Calu3 (cell line): ENCODE measurements at regions of chr3 and their contacts with region 1.

Region 1: DNA sequence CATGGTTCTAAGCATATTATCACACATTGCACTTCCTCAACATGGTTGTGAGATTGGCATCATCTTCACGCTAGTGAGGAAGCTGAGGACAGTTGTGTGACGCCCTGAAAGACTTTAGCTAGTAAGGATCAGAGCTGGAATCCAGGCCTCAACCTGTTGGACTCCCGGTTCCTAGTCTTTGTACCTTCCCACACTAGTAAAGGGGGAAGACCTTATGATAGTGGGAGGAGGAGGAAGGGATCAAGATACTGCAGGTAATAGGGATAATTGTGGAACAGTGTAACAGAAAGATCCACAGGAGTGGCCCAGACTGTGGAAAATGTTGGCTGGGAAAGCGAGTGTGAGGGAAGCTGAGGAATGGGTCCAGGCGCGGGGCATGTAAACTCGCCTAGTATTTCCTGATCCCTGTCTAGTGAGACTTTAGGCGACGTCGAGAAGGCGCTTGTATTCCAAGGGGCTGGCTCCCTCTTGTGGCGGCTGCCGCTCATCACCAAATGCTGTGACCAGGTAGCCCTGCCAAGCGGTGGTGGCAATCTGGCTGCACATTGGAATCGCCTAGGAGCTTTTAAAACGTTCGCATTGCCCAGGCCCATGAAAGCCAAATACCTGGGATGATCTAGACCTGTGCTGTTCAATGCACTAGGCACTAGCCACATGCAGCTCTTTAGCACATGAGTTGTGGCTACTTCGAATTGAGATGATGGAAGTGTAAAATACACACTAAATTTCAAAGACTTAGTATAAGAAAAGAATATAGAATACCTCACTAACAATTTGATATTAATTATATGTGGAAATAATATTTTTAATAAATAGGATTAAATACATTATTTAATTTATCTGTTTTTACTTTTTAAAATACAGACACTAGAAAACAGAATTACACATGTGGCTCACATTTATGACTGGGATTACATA is 38.8 kb upstream of the CLDN18 start:
- DNase-seq: peak; percentile 96
- H3K4me3 Mint-ChIP-seq: peak overlapping the region; percentile 33
- H3K27ac Mint-ChIP-seq: peak overlapping the region; percentile 14
- H3K4me1 Mint-ChIP-seq: peaks cover 6% of the 10 kb centered on the region
- H3K27me3 Mint-ChIP-seq: no peaks in the 10 kb centered on the region
- CTCF ChIP-seq: peak; percentile 97

Region 2: GRCh38 chr3:137032465-137033120 is 938.6 kb before region 1 on chr3:
- CTCF ChIA-PET with region 1: no interaction called
- intact Hi-C with region 1: loop called (anchors 1 kb)
- DNase-seq: peak; percentile 98
- H3K4me3 Mint-ChIP-seq: peak overlapping the region; percentile 66
- H3K27ac Mint-ChIP-seq: no peak overlapping the region
- H3K4me1 Mint-ChIP-seq: peaks cover 17% of the 10 kb centered on the region
- H3K27me3 Mint-ChIP-seq: peaks cover 7% of the 10 kb centered on the region
- CTCF ChIP-seq: peak; percentile 99

Region 3: DNA sequence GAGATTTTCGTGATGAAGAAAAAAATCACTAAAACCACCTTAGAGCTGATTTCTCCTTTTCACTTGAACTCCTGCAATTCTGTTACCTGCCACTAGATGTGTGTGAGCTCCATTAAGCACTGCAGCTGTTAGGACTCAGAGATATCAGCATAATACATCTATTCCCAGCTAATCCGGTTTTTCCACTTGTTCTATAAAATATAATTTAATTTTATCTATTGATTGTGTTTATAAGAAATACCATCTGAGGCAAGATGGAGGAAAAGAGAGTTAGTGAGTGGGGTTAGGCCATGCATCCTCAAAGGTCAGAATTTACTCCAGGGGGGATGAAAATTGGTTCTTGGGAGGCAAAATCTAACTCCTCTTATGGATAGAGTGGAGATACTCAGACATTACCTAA is 860.7 kb before region 1 on chr3:
- CTCF ChIA-PET with region 1: interaction called, 11 read pairs
- intact Hi-C with region 1: loop called (anchors 1 kb)
- DNase-seq: peak; percentile 37
- H3K4me3 Mint-ChIP-seq: no peak overlapping the region
- H3K27ac Mint-ChIP-seq: no peak overlapping the region
- H3K4me1 Mint-ChIP-seq: no peaks in the 10 kb centered on the region
- H3K27me3 Mint-ChIP-seq: peaks cover 32% of the 10 kb centered on the region
- CTCF ChIP-seq: peak; percentile 74

Region 4: DNA sequence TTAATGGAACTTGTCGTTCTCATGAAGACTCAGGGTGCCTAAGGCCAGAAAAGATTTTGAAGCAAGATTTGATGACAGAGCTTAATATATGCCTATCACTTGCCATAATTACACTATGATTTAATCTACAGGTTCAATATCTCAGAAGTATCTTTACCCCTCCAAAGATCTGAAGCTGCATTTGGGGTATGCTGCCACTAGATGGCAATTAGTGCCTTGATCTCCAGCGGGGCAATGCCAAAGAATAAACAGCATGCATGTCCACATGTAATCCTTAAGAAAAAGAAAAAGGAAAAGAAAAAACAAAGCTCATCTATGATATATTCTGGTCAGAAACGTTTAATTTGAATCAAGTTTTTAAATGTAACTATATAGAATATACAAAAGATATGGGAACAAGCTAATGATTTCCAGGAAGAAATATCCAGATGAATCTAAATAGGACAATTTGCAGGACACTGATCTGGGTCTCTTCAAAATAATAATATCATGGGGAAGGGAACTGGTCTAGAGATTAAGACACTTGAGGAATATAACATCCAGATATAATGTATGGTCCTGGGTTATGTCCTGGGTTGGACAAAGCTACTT is 262.1 kb before region 1 on chr3:
- CTCF ChIA-PET with region 1: interaction called, 6 read pairs
- intact Hi-C with region 1: loop called (anchors 1 kb)
- DNase-seq: peak; percentile 52
- H3K4me3 Mint-ChIP-seq: no peak overlapping the region
- H3K27ac Mint-ChIP-seq: no peak overlapping the region
- H3K4me1 Mint-ChIP-seq: no peaks in the 10 kb centered on the region
- H3K27me3 Mint-ChIP-seq: peaks cover 17% of the 10 kb centered on the region
- CTCF ChIP-seq: peak; percentile 47

Region 5: DNA sequence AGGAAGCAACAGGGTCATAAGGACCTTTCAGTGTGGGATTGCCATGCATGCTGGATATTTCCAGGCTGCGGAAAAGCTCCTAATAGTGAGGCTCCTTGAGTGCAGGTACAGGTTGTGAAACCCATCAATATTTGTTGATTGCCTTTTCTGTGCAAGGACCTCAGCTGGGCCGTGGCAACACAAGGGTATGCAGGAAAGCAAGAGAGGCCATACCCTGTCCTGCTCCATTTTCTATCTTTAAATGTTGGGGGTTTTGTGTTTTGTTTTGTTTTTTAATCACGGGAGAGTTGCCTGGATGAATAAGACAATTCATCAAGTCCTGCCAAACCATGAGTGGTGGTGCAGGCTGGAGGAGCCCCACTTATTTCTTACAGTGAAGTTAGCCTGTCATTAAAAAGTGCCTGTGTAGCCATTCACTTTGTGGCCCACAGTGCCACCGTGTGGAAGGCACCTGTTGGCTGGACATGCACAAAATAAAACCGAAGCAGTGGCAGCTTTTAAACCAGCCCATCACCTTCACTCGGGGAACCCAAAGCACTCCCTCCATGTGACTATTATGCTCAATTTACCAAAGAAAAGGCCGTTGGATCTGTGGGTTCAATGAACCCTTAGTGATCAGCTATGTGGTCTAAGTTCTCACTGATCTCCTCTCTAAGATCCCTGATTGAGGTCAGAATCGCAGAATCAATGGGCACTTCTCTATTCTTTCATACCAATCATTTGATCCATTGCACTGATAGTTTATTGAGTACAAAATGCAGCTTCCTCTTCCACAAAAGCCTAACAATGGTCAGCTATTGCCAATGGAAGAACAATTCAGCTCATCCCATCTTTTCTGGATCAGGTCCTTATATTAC is 81.0 kb after region 1 on chr3:
- CTCF ChIA-PET with region 1: interaction called, 4 read pairs
- intact Hi-C with region 1: loop called (anchors 1 kb)
- DNase-seq: peak; percentile 75
- H3K4me3 Mint-ChIP-seq: no peak overlapping the region
- H3K27ac Mint-ChIP-seq: no peak overlapping the region
- H3K4me1 Mint-ChIP-seq: no peaks in the 10 kb centered on the region
- H3K27me3 Mint-ChIP-seq: no peaks in the 10 kb centered on the region
- CTCF ChIP-seq: peak; percentile 80

Region 6: GRCh38 chr3:138173769-138174420 is 202.7 kb after region 1 on chr3:
- CTCF ChIA-PET with region 1: no interaction called
- intact Hi-C with region 1: no loop called
- DNase-seq: peak; percentile 19
- H3K4me3 Mint-ChIP-seq: peak overlapping the region; percentile 91
- H3K27ac Mint-ChIP-seq: peak overlapping the region; percentile 82
- H3K4me1 Mint-ChIP-seq: peaks cover 19% of the 10 kb centered on the region
- H3K27me3 Mint-ChIP-seq: no peaks in the 10 kb centered on the region
- CTCF ChIP-seq: no peak